ENCODE measurements at regions of chr6 and their contacts with region 1.

Region 1: GRCh38 chr6:1670702-1671462 is 61.2 kb downstream of the FOXC1 start:
- DNase-seq: no peak
- ATAC-seq: no peak
- H3K4me3 ChIP-seq: no peak overlapping the region
- H3K27ac ChIP-seq: no peak overlapping the region
- H3K4me1 ChIP-seq: no peaks in the 10 kb centered on the region
- H3K27me3 ChIP-seq: peaks cover 5 to 36% of the 10 kb centered on the region in 2 experiments
- CTCF ChIP-seq: no peak
- EP300 ChIP-seq: no peak
- POLR2A ChIP-seq: no peak
- RAD21 ChIP-seq: no peak

Region 2: DNA sequence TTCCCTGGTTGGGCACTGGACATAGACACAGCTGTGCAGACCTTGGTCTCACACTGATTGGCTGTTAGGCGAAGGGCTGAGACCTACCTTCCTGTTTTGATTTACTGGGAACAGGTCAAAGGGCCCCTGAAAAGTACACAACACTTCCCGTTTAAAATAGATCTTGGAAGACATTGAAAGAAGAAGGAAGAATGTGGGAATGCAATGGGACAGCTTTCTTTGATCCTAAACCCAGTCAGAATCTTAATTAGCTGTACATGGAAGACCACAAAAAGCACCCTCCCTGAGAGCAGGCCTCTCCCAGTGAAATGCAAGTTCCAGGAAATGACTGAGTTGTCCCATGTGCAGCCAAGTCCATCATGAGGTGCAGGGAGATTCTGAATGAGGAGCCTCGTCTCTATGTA is 894.4 kb before region 1 on chr6:
- CTCF ChIA-PET with region 1: no interaction called
- POLR2A ChIA-PET with region 1: no interaction called
- in situ Hi-C with region 1: no loop called
- intact Hi-C with region 1: loop called (anchors 10 kb)
- DNase-seq: no peak
- ATAC-seq: no peak
- H3K4me3 ChIP-seq: no peak overlapping the region
- H3K27ac ChIP-seq: no peak overlapping the region
- H3K4me1 ChIP-seq: peaks cover 3 to 10% of the 10 kb centered on the region in 2 experiments
- H3K27me3 ChIP-seq: peaks cover 15 to 32% of the 10 kb centered on the region in 2 experiments
- CTCF ChIP-seq: no peak
- EP300 ChIP-seq: no peak
- POLR2A ChIP-seq: no peak
- RAD21 ChIP-seq: no peak

Region 3: DNA sequence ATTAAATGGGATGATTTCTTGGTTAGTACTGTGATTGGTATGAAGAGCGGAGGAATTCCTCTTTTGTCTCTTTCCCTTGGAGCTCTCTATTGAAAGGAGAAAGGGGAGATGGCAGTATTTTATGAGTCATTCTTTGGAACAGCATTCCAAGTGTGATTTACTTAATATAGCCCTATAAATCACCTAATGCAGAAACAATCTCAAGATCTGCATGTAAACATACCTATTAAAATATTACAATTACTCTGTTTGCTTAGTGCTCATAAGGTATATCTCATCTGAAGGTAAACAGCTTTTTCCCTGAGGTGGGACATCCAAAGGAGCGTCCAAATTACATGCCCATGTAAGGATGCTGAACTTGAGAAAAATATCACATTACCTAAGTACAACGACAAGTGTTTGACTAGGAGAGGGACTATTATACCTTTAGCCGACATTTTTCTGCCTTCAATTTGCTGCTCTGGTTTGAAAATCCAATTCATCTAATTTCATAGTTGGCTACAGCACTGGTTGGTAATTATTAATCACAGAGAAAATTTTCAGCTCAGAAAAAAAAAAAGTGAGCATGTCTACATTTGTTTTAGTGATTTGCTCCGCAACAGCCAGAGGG is 167.8 kb after region 1 on chr6:
- CTCF ChIA-PET with region 1: no interaction called
- POLR2A ChIA-PET with region 1: no interaction called
- in situ Hi-C with region 1: no loop called
- intact Hi-C with region 1: no loop called
- DNase-seq: no peak
- ATAC-seq: no peak
- H3K4me3 ChIP-seq: no peak overlapping the region
- H3K27ac ChIP-seq: no peak overlapping the region
- H3K4me1 ChIP-seq: no peaks in the 10 kb centered on the region
- H3K27me3 ChIP-seq: peaks cover 18 to 26% of the 10 kb centered on the region in 2 experiments; a peak in 4 of 5 replicates
- CTCF ChIP-seq: no peak
- EP300 ChIP-seq: no peak
- POLR2A ChIP-seq: no peak
- RAD21 ChIP-seq: no peak